ENCODE measurements at regions of chr13 and their contacts with region 1.

Region 1: DNA sequence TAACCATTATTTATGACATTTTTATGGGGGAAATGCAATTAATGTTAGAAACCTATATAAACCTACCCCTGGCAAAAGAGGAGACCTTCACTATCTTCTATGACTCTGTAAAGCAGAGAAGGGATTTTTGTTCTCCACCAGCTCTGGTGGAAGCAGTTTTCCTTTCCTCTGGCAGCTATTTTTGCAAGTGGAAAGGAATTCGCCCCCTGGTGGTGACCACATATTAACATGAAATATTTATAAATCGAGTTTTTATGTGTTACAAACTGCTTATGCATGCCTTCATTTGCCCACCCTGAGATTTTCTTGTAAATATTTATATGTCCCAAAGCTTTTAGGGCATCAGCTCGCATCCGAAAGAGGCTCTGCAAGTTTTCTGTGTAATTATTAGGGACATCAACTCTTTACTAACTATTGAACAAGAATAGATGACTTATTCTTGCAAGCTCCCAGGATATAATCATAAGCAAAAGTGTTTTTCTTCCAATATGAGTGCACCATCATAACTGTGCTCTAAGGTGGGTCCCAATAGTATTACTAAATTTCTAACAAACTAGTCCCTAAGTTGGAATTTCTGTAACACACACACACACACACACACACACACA is 62.4 kb downstream of the SERTM1 start:
- DNase-seq: peak in 1 of 2 donors; percentile 62
- ATAC-seq: no peak
- H3K4me3 ChIP-seq: no peak overlapping the region
- H3K4me3 Mint-ChIP-seq: no peak overlapping the region
- H3K27ac ChIP-seq: no peak overlapping the region
- H3K27ac Mint-ChIP-seq: no peak overlapping the region
- H3K4me1 ChIP-seq: no peaks in the 10 kb centered on the region
- H3K4me1 Mint-ChIP-seq: no peaks in the 10 kb centered on the region
- H3K27me3 ChIP-seq: no peaks in the 10 kb centered on the region
- H3K27me3 Mint-ChIP-seq: peaks cover 0 to 5% of the 10 kb centered on the region in 2 donors
- CTCF ChIP-seq: peak; percentile 71

Region 2: DNA sequence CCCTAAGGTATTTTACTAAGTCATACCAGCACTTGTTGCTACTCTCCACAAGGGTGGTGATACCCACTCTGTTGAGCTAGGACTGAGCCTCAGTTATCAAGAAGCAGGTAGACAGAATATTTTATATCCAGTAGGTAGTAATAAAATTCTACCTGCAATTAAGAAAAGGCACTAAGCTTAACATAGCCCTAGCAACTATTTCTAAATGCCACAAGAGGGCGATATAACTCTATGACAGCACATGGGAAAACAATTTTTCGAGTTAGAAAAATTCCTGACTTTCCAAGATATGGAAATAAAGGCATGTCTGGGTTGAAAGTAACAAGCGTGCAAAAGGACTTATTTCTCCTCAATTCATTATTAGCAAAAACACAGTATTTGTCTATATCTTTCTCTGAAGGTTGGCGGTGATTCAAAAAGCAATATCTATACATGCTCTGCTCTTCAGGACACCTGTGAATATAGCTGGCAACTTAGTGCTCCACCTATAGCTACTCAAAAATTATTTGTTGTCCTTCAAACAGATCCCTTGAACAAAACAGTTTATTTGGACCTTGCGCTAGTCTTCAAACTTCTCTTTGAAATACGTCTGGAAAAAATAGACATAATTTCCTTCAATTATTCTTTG is 453.3 kb before region 1 on chr13:
- intact Hi-C with region 1: loop called (anchors 5 kb)
- DNase-seq: peak in 1 of 2 donors; percentile 36
- ATAC-seq: peak in 1 of 3 donors; percentile 50
- H3K4me3 ChIP-seq: no peak overlapping the region
- H3K4me3 Mint-ChIP-seq: no peak overlapping the region
- H3K27ac ChIP-seq: no peak overlapping the region
- H3K27ac Mint-ChIP-seq: no peak overlapping the region
- H3K4me1 ChIP-seq: no peaks in the 10 kb centered on the region
- H3K4me1 Mint-ChIP-seq: no peaks in the 10 kb centered on the region
- H3K27me3 ChIP-seq: no peaks in the 10 kb centered on the region
- H3K27me3 Mint-ChIP-seq: peaks cover 8 to 11% of the 10 kb centered on the region in 2 donors
- CTCF ChIP-seq: peak; percentile 81

Region 3: GRCh38 chr13:36718686-36719085 is 17.5 kb before region 1 on chr13:
- intact Hi-C with region 1: no loop called
- DNase-seq: no peak
- ATAC-seq: no peak
- H3K4me3 ChIP-seq: no peak overlapping the region
- H3K4me3 Mint-ChIP-seq: no peak overlapping the region
- H3K27ac ChIP-seq: no peak overlapping the region
- H3K27ac Mint-ChIP-seq: no peak overlapping the region
- H3K4me1 ChIP-seq: no peaks in the 10 kb centered on the region
- H3K4me1 Mint-ChIP-seq: no peaks in the 10 kb centered on the region
- H3K27me3 ChIP-seq: no peaks in the 10 kb centered on the region
- H3K27me3 Mint-ChIP-seq: peaks cover 8 to 15% of the 10 kb centered on the region in 2 donors
- CTCF ChIP-seq: no peak

Region 4: GRCh38 chr13:36965773-36966172 is 229.6 kb after region 1 on chr13:
- intact Hi-C with region 1: no loop called
- DNase-seq: no peak
- ATAC-seq: no peak
- H3K4me3 ChIP-seq: no peak overlapping the region
- H3K4me3 Mint-ChIP-seq: no peak overlapping the region
- H3K27ac ChIP-seq: no peak overlapping the region
- H3K27ac Mint-ChIP-seq: no peak overlapping the region
- H3K4me1 ChIP-seq: no peaks in the 10 kb centered on the region
- H3K4me1 Mint-ChIP-seq: no peaks in the 10 kb centered on the region
- H3K27me3 ChIP-seq: no peaks in the 10 kb centered on the region
- H3K27me3 Mint-ChIP-seq: no peaks in the 10 kb centered on the region
- CTCF ChIP-seq: no peak